ENCODE measurements at regions of chr2 and their contacts with region 1.

Region 1: DNA sequence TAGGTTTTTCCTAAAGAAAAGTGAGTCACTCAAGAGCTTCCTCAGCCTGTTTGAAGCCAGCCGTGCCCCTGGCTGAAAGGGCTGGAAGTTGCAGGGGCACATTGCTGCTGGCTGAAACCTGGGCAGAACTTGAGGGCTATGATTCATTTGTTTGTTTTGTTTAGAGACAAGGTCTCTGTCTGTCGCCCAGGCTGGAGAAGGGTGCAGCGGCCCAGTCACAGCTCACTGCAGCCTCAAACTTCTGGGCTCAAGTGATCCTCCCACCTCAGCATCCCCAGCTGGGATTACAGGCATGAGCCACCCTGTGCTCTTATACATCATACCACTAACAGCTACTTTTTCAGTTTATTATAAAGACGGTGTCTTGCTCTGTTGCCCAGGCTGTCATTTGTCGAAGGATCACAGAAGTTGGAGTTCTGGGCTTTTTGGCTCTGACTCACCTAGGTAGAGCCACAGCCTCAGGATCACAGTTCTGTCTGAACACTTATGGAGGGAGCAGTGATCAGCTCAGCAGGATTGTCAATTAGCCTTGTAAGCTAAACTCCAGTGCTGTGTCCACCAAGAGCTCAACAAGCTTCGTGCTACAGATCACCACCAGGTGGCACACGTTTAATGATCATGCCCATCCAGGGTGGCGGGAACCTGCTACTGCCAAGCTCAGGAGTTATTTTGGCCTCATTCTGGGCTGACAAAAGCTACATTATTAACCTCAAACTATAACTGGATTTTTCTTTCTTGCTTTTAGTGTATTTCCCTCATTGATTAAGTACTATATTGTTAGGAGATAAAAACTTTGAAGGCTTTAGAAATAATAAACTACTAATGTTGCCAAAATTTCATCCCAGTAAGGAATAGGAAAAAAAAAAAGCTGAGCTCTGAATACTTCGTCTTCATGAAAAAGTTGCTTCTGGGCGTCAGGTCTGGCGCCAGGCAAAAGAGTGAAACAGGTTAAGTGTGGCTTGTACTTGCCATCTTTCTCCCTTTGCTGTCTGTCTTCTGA is 57.9 kb downstream of the ARHGEF33 start:
- DNase-seq: peak; percentile 84
- H3K4me3 ChIP-seq: no peak overlapping the region; a peak in 1 of 4 replicates
- H3K27ac ChIP-seq: peak overlapping the region in 1 of 2 experiments; percentile 32; a peak in 2 of 4 replicates
- H3K4me1 ChIP-seq: 0 out of 4 replicates have a peak, but pooled peaks cover 0 to 7% of the 10 kb centered on the region in 2 experiments
- H3K27me3 ChIP-seq: no peaks in the 10 kb centered on the region
- CTCF ChIP-seq: peak; percentile 87
- EP300 ChIP-seq: no peak
- RAD21 ChIP-seq: peak; percentile 78

Region 2: DNA sequence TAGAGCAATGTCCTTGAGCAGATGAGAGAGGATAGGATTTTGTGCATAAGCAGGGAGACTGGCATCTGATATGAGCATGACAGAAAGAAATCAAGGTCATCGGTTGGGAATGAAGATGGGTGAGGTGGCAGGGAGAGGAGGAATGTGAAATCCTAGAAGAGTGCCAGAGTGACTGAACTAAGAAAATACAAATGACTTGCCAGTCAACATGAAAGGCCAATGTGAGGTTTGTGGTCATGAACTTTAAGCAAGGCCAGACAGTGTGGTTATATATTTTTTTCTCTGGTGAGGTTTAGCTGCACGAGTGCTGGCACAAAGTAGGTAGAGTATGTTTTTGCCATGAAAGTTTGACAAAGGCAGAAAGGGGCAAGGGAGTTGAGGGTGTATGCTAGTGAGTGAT is 1581.9 kb before region 1 on chr2:
- CTCF ChIA-PET with region 1: no interaction called
- POLR2A ChIA-PET with region 1: no interaction called
- DNase-seq: no peak
- H3K4me3 ChIP-seq: no peak overlapping the region
- H3K27ac ChIP-seq: no peak overlapping the region
- H3K4me1 ChIP-seq: peaks cover 0 to 18% of the 10 kb centered on the region in 2 experiments; a peak in 2 of 4 replicates
- H3K27me3 ChIP-seq: no peaks in the 10 kb centered on the region
- CTCF ChIP-seq: no peak
- EP300 ChIP-seq: no peak
- RAD21 ChIP-seq: no peak

Region 3: DNA sequence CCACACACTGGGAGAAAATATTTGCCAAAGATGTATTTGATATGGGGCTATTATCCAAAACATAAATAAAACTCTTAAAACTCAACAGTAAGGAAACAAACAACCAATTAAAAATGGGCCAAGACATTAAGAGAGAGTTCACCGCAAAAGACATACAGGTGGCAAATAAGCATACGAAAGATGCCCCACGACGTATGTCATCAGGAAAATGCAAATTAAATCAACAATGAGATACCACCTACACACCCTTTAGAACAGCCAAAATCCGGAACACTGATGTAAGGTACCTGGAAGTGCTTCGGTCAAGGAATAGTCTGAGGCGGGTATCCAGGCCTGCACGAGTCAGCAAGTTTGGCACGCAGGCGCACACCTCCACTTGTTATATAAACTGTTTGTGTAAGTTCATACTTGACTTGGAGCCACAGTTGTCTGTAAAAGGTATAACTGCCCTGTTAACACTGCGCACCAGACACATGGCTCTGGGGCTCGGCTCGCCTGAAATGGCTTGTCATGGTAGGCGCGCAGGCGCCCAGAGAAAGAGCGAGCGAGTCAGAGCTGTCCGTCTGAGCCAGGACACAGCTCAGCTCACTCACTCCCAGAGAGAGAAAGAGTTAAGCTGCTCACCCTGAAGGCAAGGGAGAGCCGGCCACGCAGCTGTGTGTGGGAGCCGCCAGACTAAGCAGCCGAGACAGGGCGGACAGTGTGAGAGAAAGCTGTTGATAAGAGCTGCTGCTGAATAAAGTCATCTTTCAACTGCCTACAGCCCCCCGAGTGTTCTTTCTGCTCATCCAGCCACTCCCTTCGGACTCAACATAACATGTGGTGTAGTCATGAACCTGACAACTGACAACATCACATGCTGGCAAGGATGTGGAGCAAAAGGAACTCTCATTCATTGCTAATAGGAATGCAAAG is 432.1 kb before region 1 on chr2:
- CTCF ChIA-PET with region 1: no interaction called
- POLR2A ChIA-PET with region 1: no interaction called
- DNase-seq: no peak
- H3K4me3 ChIP-seq: no peak overlapping the region
- H3K27ac ChIP-seq: no peak overlapping the region
- H3K4me1 ChIP-seq: peaks cover 0 to 2% of the 10 kb centered on the region in 2 experiments; a peak in 1 of 4 replicates
- H3K27me3 ChIP-seq: no peaks in the 10 kb centered on the region
- CTCF ChIP-seq: no peak
- EP300 ChIP-seq: no peak
- RAD21 ChIP-seq: no peak

Region 4: DNA sequence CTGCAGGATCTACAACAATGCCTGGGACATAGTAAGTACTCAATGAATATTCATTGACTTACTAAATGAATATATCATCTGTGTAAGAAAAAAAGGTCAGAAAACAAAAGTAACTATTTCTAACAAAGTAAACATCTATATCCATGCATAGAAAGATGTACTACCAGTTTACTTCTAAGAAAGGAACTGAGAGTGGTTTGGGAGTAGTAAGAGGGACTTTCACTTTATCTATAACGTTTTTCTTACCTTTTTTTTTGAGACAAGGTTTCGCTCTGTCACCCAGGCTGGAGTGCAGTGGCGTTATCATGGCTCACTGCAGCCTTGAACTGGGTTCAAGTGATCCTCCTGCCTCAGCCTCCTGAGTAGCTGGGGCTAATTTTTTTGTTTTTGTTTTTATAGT is 97.5 kb before region 1 on chr2:
- CTCF ChIA-PET with region 1: no interaction called
- POLR2A ChIA-PET with region 1: no interaction called
- DNase-seq: no peak
- H3K4me3 ChIP-seq: no peak overlapping the region
- H3K27ac ChIP-seq: no peak overlapping the region
- H3K4me1 ChIP-seq: no peaks in the 10 kb centered on the region
- H3K27me3 ChIP-seq: no peaks in the 10 kb centered on the region
- CTCF ChIP-seq: no peak
- EP300 ChIP-seq: no peak
- RAD21 ChIP-seq: no peak

Region 5: DNA sequence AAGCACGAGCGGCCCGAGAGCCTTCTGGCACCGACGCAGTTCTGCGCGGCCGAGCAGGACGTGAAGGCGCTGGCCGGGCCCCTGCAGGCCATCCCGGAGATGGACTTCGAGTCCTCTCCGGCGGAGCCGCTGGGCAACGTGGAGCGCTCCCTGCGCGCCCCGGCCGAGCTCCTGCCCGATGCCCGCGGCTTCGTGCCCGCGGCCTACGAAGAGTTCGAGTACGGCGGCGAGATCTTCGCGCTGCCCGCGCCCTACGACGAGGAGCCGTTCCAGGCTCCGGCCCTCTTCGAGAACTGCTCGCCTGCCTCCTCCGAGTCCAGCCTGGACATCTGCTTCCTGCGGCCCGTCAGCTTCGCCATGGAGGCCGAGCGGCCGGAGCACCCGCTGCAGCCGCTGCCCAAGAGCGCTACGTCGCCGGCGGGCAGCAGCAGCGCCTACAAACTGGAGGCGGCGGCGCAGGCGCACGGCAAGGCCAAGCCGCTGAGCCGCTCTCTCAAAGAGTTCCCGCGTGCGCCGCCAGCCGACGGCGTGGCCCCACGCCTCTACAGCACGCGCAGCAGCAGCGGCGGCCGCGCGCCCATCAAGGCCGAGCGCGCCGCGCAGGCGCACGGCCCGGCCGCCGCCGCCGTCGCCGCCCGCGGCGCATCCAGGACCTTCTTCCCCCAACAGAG is 12.5 kb after region 1 on chr2:
- CTCF ChIA-PET with region 1: interaction called, 76 read pairs
- POLR2A ChIA-PET with region 1: no interaction called
- DNase-seq: peak; percentile 91
- H3K4me3 ChIP-seq: peak overlapping the region in 1 of 2 experiments; percentile 27; a peak in 1 of 4 replicates
- H3K27ac ChIP-seq: no peak overlapping the region
- H3K4me1 ChIP-seq: peaks cover 0 to 3% of the 10 kb centered on the region in 2 experiments; a peak in 1 of 4 replicates
- H3K27me3 ChIP-seq: no peaks in the 10 kb centered on the region
- CTCF ChIP-seq: no peak
- EP300 ChIP-seq: no peak
- RAD21 ChIP-seq: no peak

Region 6: DNA sequence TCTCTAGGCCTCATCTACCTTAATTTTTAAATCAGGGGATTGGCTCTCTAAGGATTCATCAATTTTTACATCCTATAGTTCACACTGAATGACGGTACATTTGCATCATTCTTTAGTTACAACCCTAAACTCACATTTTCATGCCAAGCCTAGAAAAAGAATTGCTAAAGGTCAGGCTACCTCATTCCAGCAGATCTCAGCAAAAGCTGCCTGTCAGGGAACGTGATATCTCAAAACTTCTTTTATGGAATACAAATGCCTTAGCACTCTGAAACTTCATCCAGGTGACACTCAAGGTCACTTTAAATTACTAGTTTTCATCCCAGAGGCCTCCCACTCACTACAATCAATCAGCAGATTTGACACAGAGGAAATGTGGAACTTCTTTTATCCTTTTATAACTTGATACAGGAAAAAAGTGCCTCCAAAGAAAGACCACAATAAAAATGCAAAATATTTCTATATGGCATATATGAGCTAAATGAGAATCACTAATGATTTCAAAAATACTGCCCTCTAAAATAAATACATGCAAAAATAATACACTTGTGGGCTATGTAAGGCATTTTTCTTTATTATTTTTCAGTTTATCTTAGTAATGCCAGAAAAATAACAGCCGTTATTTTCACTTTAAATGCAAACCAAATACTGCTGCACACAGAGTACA is 33.6 kb after region 1 on chr2:
- CTCF ChIA-PET with region 1: interaction called, 11 read pairs
- POLR2A ChIA-PET with region 1: no interaction called
- DNase-seq: no peak
- H3K4me3 ChIP-seq: no peak overlapping the region
- H3K27ac ChIP-seq: no peak overlapping the region
- H3K4me1 ChIP-seq: no peaks in the 10 kb centered on the region; a peak in 2 of 4 replicates
- H3K27me3 ChIP-seq: no peaks in the 10 kb centered on the region
- CTCF ChIP-seq: no peak
- EP300 ChIP-seq: no peak
- RAD21 ChIP-seq: no peak

Region 7: DNA sequence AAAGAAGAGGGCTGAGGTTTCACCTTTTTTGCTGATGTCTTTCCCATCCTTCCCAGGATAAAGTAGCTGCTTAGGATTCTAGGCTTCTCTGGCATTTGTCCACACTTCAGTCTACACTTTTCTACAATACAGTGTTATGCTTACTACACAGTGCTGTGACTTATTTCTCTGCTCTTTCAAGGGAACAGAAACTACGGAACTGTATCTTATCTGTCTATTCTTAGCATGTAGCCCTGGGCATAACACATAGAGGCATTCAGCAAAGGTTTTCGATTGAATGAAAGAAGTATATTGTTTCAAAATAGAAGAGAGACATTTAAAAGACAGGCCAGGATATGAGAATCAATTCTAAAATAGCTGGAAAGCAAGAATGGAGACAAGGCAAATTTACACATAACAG is 53.0 kb after region 1 on chr2:
- CTCF ChIA-PET with region 1: interaction called, 12 read pairs
- POLR2A ChIA-PET with region 1: no interaction called
- DNase-seq: no peak
- H3K4me3 ChIP-seq: no peak overlapping the region
- H3K27ac ChIP-seq: no peak overlapping the region
- H3K4me1 ChIP-seq: peaks cover 0 to 3% of the 10 kb centered on the region in 2 experiments; a peak in 1 of 4 replicates
- H3K27me3 ChIP-seq: no peaks in the 10 kb centered on the region
- CTCF ChIP-seq: no peak
- EP300 ChIP-seq: no peak
- RAD21 ChIP-seq: no peak

Region 8: GRCh38 chr2:39069136-39069515 is 121.6 kb after region 1 on chr2:
- CTCF ChIA-PET with region 1: interaction called, 12 read pairs
- POLR2A ChIA-PET with region 1: no interaction called
- DNase-seq: no peak
- H3K4me3 ChIP-seq: no peak overlapping the region
- H3K27ac ChIP-seq: no peak overlapping the region
- H3K4me1 ChIP-seq: no peaks in the 10 kb centered on the region
- H3K27me3 ChIP-seq: no peaks in the 10 kb centered on the region
- CTCF ChIP-seq: no peak
- EP300 ChIP-seq: no peak
- RAD21 ChIP-seq: peak; percentile 48

Measured in SK-N-SH (cell line).